Activated T-helper 2 cell treated with anti-CD3 and anti-CD28 coated beads, Interferon-gamma antibody, Interleukin-2, Interleukin-4, amounts not matched to agents 10 μg/mL and 5 μg/mL and 100 μg/mL, durations not matched to agents 14 hours and 24 hours and 36 hours (primary cell): ENCODE measurements at regions of chr2 and their contacts with region 1.

Region 1: GRCh38 chr2:7825591-7826312 is 856.1 kb upstream of the ID2 start:
- DNase-seq: peak; percentile 46
- H3K4me3 Mint-ChIP-seq: peak overlapping the region; percentile 31
- H3K27ac Mint-ChIP-seq: peak overlapping the region; percentile 94
- H3K4me1 Mint-ChIP-seq: peaks cover 43% of the 10 kb centered on the region
- H3K27me3 Mint-ChIP-seq: no peaks in the 10 kb centered on the region

Region 2: GRCh38 chr2:7437716-7438632 is 387.8 kb before region 1 on chr2:
- intact Hi-C with region 1: loop called (anchors 1 kb)
- DNase-seq: no peak
- H3K4me3 Mint-ChIP-seq: peak overlapping the region; percentile 39
- H3K27ac Mint-ChIP-seq: peak overlapping the region; percentile 95
- H3K4me1 Mint-ChIP-seq: peaks cover 79% of the 10 kb centered on the region
- H3K27me3 Mint-ChIP-seq: no peaks in the 10 kb centered on the region

Region 3: GRCh38 chr2:7567646-7568045 is 258.1 kb before region 1 on chr2:
- intact Hi-C with region 1: loop called (anchors 5 kb)
- DNase-seq: peak; percentile 53
- H3K4me3 Mint-ChIP-seq: peak overlapping the region; percentile 37
- H3K27ac Mint-ChIP-seq: peak overlapping the region; percentile 82
- H3K4me1 Mint-ChIP-seq: peaks cover 63% of the 10 kb centered on the region
- H3K27me3 Mint-ChIP-seq: no peaks in the 10 kb centered on the region

Region 4: DNA sequence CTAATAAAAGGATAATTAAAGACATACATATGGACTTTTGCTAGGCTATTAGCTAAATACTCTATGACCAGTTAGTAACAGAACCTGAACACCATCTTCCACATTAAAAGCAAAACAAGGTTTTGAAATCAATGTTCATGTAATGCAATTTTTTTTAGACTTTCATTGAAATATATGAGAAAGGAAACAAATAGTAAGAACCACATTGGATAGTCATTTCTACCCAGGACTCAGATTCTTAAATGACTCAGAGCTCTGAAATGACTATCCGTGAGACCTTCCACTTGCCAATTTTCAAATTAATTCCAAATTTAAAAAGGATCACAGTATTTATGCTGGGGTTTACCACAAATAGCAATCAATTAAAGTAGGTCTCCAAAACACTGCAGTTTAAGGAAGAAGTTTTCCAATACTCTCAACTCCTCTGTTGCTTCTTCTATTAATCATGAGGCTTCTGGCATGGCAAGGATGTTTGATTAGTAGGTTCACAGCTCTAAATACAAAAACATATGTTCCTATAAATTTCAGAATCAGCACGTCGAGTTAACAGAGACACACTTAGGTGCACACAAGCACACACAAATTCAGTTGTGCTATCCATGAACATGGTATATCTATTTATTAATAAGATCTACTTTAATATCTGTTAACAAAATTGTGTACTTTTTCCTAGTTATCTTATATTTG is 67.5 kb before region 1 on chr2:
- intact Hi-C with region 1: loop called (anchors 1 kb)
- DNase-seq: no peak
- H3K4me3 Mint-ChIP-seq: no peak overlapping the region
- H3K27ac Mint-ChIP-seq: peak overlapping the region; percentile 78
- H3K4me1 Mint-ChIP-seq: peaks cover 18% of the 10 kb centered on the region
- H3K27me3 Mint-ChIP-seq: no peaks in the 10 kb centered on the region

Region 5: GRCh38 chr2:7809640-7810039 is 16.1 kb before region 1 on chr2:
- intact Hi-C with region 1: no loop called
- DNase-seq: no peak
- H3K4me3 Mint-ChIP-seq: no peak overlapping the region
- H3K27ac Mint-ChIP-seq: no peak overlapping the region
- H3K4me1 Mint-ChIP-seq: peaks cover 21% of the 10 kb centered on the region
- H3K27me3 Mint-ChIP-seq: no peaks in the 10 kb centered on the region

Region 6: DNA sequence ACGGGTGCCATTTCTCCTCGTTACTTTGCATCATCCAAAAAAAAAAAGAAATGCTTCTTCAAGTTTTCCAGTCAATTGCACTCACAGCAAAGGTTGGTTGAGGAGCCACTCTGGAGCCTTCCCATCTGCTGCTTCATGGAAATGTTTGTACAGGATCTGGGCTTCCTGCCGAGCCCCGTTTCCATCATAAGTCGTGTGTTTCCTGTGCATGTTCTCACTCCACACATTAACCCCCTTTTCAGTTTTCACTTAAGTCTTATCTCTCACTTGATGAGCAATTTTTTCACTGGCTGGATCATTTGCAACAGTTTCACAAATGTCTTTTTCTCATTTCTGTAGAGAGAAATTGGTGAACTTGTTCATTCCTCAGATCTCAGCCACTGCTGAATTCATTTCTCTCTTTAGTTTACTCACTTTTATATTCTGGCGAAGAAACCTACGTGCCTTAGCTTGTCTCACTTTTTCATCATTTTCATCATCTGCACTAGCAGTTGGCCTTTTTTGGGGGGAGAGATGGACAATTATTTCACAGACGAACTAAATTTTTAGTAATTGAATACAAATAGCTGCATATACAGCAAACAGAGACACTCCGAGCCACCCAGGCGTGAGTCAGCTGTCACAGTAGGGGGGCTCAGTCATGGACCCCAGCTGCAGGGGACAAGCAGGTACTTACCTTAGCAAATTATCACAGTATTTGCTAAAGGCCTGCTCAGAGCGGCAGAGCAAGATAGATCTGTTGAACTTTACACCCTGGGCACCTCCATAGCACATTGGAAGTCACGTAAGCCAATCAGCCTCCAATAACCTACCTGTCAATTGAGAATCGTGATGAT is 105.3 kb after region 1 on chr2:
- intact Hi-C with region 1: loop called (anchors 1 kb)
- DNase-seq: no peak
- H3K4me3 Mint-ChIP-seq: peak overlapping the region; percentile 17
- H3K27ac Mint-ChIP-seq: peak overlapping the region; percentile 85
- H3K4me1 Mint-ChIP-seq: peaks cover 36% of the 10 kb centered on the region
- H3K27me3 Mint-ChIP-seq: no peaks in the 10 kb centered on the region

Region 7: GRCh38 chr2:8303322-8303832 is 477.6 kb after region 1 on chr2:
- intact Hi-C with region 1: loop called (anchors 10 kb)
- DNase-seq: peak; percentile 82
- H3K4me3 Mint-ChIP-seq: peak overlapping the region; percentile 49
- H3K27ac Mint-ChIP-seq: peak overlapping the region; percentile 47
- H3K4me1 Mint-ChIP-seq: peaks cover 81% of the 10 kb centered on the region
- H3K27me3 Mint-ChIP-seq: no peaks in the 10 kb centered on the region

Region 8: DNA sequence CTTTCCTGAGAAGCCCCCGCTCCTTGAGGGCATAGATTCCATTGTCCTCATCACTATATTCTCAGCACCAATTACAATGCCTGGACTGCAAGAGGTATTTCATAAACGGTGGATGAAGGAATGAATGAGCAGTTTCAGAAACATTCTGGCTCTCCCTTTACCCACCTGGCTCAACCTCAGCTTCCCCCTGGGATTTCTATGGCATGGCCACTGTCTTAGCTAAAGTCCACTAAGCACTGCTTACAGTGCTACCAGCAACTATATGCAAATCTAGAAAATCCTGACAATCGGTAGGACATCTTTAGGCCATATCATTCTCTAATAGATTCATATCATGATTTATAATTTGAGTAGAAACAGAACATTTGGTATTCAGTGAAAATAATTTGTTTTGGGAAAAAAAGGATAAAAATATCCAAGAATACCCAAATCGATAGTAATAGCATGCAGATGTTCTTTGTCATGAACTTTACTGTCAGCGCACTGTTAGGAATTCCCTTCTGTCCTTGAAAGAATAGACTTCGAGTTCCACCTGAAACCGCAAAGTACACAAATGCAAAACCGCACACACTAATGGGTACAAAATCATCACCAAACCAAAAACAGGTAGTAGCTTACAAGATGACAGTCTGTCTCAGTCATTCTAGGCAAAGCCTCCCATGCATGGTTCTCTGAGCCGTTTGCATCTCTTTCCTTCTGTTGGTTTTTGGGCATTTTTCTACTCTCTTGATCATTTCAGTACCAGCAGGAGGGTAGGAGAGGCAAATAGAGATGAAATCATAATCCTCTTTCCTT is 552.5 kb after region 1 on chr2:
- intact Hi-C with region 1: no loop called
- DNase-seq: no peak
- H3K4me3 Mint-ChIP-seq: no peak overlapping the region
- H3K27ac Mint-ChIP-seq: no peak overlapping the region
- H3K4me1 Mint-ChIP-seq: peaks cover 23% of the 10 kb centered on the region
- H3K27me3 Mint-ChIP-seq: peaks cover 8% of the 10 kb centered on the region

Region 9: GRCh38 chr2:8606226-8606625 is 780.5 kb after region 1 on chr2:
- intact Hi-C with region 1: loop called (anchors 5 kb)
- DNase-seq: no peak
- H3K4me3 Mint-ChIP-seq: no peak overlapping the region
- H3K27ac Mint-ChIP-seq: peak overlapping the region; percentile 53
- H3K4me1 Mint-ChIP-seq: peaks cover 55% of the 10 kb centered on the region
- H3K27me3 Mint-ChIP-seq: peaks cover 7% of the 10 kb centered on the region